GM13976 (cell line): ENCODE measurements at regions of chr5 and their contacts with region 1.

Region 1: DNA sequence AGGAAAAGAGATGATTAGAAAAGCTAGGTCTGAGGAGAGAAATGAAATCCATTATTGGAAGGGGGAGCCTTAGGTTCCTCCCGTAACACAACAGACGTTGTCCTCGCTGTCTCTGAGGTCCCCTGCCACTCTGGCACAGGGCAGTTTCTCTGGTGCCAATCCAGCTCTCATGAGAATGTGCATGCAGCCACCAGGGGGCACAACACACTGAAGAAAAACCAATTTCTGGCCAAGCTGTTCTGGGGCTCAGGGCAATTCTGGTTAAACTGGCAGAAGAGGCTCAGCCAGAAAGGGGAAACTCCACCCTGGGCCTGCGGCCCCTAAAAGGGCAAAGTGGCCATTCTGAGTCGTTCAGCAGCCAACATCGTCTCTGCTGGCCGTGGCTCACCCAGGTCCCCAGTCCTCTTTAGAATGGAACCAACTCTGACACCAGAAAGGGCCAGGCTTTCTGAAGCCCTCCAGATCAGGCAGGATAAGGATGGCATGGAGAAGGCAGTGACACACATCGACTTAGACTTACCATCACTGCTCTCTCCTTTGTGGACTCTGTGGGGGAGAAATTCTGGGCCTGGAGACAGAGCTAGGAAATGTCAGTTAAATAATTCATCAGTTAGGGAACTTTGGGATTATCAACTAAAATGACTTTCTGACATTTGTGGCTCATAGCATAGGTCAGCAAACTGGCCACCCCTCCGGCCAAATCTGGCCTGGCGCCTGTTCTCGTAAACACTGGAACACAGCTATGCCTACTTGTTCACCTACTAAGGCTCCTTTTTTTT is 58.5 kb upstream of the GOLPH3 start:
- DNase-seq: peak; percentile 81
- CTCF ChIP-seq: peak; percentile 75

Region 2: GRCh38 chr5:32613050-32613672 is 380.5 kb after region 1 on chr5:
- in situ Hi-C with region 1: loop called (anchors 10 kb)
- DNase-seq: peak; percentile 82
- CTCF ChIP-seq: peak; percentile 87